ENCODE measurements at regions of chr14 and their contacts with region 1.

Region 1: GRCh38 chr14:24215495-24216344 is at the start of gene MDP1:
- DNase-seq: peak; percentile 93
- ATAC-seq: peak; percentile 76
- H3K4me3 Mint-ChIP-seq: peak within 1 kb of the TSS; percentile 92
- H3K27ac Mint-ChIP-seq: peak within 1 kb of the TSS; percentile 95
- H3K4me1 Mint-ChIP-seq: peaks cover 44% of the 10 kb centered on the region
- H3K27me3 Mint-ChIP-seq: no peaks in the 10 kb centered on the region
- total RNA-seq, gene MDP1: 4.5 to 11.7 TPM

Region 2: GRCh38 chr14:23984891-23985602 is 230.7 kb before region 1 on chr14:
- CTCF ChIA-PET with region 1: no interaction called
- POLR2A ChIA-PET with region 1: no interaction called
- intact Hi-C with region 1: no loop called
- DNase-seq: no peak
- ATAC-seq: no peak
- H3K4me3 Mint-ChIP-seq: no peak overlapping the region
- H3K27ac Mint-ChIP-seq: no peak overlapping the region
- H3K4me1 Mint-ChIP-seq: peaks cover 18% of the 10 kb centered on the region
- H3K27me3 Mint-ChIP-seq: no peaks in the 10 kb centered on the region

Region 3: DNA sequence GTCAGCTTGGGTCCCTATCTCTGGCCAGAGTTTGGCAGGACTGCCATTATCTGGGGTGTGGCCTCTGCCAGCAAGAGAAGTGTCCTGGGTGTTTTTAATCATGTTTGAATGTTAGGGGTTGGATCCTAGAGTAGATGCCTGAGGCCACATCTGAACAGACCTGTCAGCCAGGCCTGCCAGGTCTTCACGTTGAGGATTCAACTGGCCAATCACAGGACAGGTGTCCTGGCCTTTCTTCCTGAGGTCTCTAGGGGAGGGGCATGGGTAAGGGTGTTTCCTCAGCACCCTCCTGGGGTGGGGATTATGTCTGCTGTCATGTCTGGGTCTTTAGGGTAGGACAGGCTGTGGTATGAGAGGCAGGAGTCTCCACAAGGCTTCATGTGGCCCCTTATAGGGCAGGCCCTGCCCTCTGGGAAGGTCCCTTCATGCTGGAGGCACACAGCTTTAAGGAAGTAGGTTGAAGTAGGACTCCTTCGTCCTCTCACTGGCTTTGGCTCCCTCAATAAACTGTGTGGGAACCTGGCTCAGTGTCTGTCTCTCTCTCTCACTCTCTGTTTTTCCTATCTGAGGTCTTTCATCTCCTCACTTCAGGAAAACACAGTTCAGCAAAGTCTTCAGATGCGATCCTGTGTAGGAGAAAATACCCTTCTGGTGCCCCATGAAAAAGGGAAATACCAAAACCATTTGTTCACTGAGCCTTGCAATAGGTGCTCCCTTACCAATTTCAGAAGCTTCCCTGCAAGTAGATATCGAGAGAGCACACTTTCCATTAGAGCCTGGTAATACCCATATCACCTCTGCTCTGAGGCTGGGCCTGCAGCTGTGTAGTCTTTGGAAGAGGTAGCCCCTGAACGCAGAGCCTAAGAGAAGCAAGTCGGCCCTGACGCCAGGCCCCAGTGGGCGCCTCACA is 92.0 kb before region 1 on chr14:
- CTCF ChIA-PET with region 1: no interaction called
- POLR2A ChIA-PET with region 1: no interaction called
- intact Hi-C with region 1: no loop called
- DNase-seq: no peak
- ATAC-seq: no peak
- H3K4me3 Mint-ChIP-seq: no peak overlapping the region
- H3K27ac Mint-ChIP-seq: no peak overlapping the region
- H3K4me1 Mint-ChIP-seq: peaks cover 2% of the 10 kb centered on the region
- H3K27me3 Mint-ChIP-seq: no peaks in the 10 kb centered on the region

Region 4: GRCh38 chr14:24135834-24136542 is 79.7 kb before region 1 on chr14 and contains the start of gene PSME1:
- CTCF ChIA-PET with region 1: interaction called, 3 read pairs
- POLR2A ChIA-PET with region 1: interaction called, 3 read pairs
- intact Hi-C with region 1: loop called in 1 of 2 experiments (anchors 1 kb)
- DNase-seq: peak; percentile 98
- ATAC-seq: peak; percentile 95
- H3K4me3 Mint-ChIP-seq: peak within 1 kb of the TSS; percentile 92
- H3K27ac Mint-ChIP-seq: peak within 1 kb of the TSS; percentile 92
- H3K4me1 Mint-ChIP-seq: peaks cover 50% of the 10 kb centered on the region
- H3K27me3 Mint-ChIP-seq: no peaks in the 10 kb centered on the region
- total RNA-seq, gene PSME1: 414 to 418 TPM

Region 5: DNA sequence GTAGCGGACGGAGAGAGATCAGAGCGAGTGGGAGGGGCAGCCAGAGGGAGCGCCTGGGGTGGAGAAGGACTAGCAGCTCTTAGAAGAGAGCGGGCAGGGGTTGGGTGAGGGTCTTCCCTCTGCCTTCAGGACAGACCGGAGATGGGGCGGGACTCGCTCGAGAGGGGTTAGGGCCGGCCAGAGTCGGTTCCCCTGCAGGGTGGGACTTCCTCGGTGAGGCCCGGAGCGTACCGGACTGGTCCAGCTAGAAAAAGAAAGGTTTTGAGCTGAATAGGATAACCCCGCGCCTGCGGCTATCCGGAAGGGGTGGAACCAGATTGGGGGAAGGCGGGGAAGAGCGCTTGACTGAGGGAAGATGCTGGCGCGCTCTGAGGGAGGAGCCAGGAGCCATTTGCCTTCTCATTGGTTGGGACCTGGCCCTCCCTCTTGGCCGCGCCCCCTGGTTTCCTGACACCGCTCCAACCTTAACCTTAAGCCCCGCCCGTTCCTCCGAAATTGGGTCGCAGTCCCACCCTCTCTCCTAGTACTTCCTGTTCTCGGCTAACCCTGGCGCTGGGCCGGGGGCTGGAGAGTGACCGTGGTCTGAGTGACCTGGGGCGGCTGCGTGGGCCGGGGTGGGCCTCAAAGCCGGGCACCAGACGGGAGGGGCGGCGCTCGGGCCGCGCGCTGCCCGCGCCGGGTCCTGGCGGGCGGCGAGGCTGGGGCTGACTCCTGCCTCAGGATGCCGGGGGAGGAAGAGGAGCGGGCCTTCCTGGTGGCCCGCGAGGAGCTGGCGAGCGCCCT is 68.6 kb before region 1 on chr14 and contains the start of gene RNF31:
- CTCF ChIA-PET with region 1: interaction called, 3 read pairs
- POLR2A ChIA-PET with region 1: no interaction called
- intact Hi-C with region 1: loop called (anchors 1 to 2 kb)
- DNase-seq: peak; percentile 99
- ATAC-seq: peak; percentile 89
- H3K4me3 Mint-ChIP-seq: peak within 1 kb of the TSS; percentile 94
- H3K27ac Mint-ChIP-seq: peak within 1 kb of the TSS; percentile 97
- H3K4me1 Mint-ChIP-seq: peaks cover 57% of the 10 kb centered on the region
- H3K27me3 Mint-ChIP-seq: no peaks in the 10 kb centered on the region
- total RNA-seq, gene RNF31: 73.7 to 98.4 TPM

Region 6: GRCh38 chr14:24195191-24196070 is 20.3 kb before region 1 on chr14 and contains the start of gene TM9SF1:
- CTCF ChIA-PET with region 1: interaction called, 13 read pairs
- POLR2A ChIA-PET with region 1: interaction called, 13 read pairs
- intact Hi-C with region 1: loop called (anchors 1 kb)
- DNase-seq: peak; percentile 93
- ATAC-seq: peak; percentile 93
- H3K4me3 Mint-ChIP-seq: peak within 1 kb of the TSS; percentile 90
- H3K27ac Mint-ChIP-seq: peak within 1 kb of the TSS; percentile 93
- H3K4me1 Mint-ChIP-seq: peaks cover 50% of the 10 kb centered on the region
- H3K27me3 Mint-ChIP-seq: no peaks in the 10 kb centered on the region
- total RNA-seq, gene TM9SF1: 17.0 to 24.4 TPM

Region 7: GRCh38 chr14:24310646-24311604 is 95.2 kb after region 1 on chr14 and contains the start of gene LTB4R:
- CTCF ChIA-PET with region 1: interaction called, 44 read pairs
- POLR2A ChIA-PET with region 1: interaction called, 5 read pairs
- intact Hi-C with region 1: loop called in 1 of 2 experiments (anchors 1 kb)
- DNase-seq: peak; percentile 81
- ATAC-seq: peak; percentile 83
- H3K4me3 Mint-ChIP-seq: peak within 1 kb of the TSS; percentile 70
- H3K27ac Mint-ChIP-seq: peak within 1 kb of the TSS; percentile 77
- H3K4me1 Mint-ChIP-seq: peaks cover 61% of the 10 kb centered on the region
- H3K27me3 Mint-ChIP-seq: no peaks in the 10 kb centered on the region
- total RNA-seq, gene LTB4R: 10.1 to 14.2 TPM

Region 8: GRCh38 chr14:24630872-24631477 is 415.3 kb after region 1 on chr14:
- CTCF ChIA-PET with region 1: no interaction called
- POLR2A ChIA-PET with region 1: no interaction called
- intact Hi-C with region 1: no loop called
- DNase-seq: no peak
- ATAC-seq: peak; percentile 1
- H3K4me3 Mint-ChIP-seq: peak overlapping the region; percentile 78
- H3K27ac Mint-ChIP-seq: peak overlapping the region; percentile 88
- H3K4me1 Mint-ChIP-seq: peaks cover 12% of the 10 kb centered on the region
- H3K27me3 Mint-ChIP-seq: no peaks in the 10 kb centered on the region

Measured in activated CD4-positive, alpha-beta T cell treated with anti-CD3 and anti-CD28 coated beads for 36 hours (primary cell).